Heart left ventricle (tissue), 16 donors: ENCODE measurements at regions of chr7 and their contacts with region 1.

Region 1: GRCh38 chr7:36291387-36292316 is 98.0 kb upstream of the ANLN start:
- DNase-seq: peak; percentile 81 to 91 (median 88)
- ATAC-seq: peak; percentile 87 to 94 (median 92)
- H3K4me3 ChIP-seq: peak overlapping the region in 11 of 12 donors; percentile 9 to 59 (median 43)
- H3K27ac ChIP-seq: peak overlapping the region; percentile 8 to 86 (median 80)
- H3K4me1 ChIP-seq: peaks cover 0 to 49% (median 30%) of the 10 kb centered on the region in 12 donors
- H3K27me3 ChIP-seq: no peaks in the 10 kb centered on the region
- CTCF ChIP-seq: peak; percentile 93 to 99 (median 98)
- POLR2A ChIP-seq: no peak

Region 2: DNA sequence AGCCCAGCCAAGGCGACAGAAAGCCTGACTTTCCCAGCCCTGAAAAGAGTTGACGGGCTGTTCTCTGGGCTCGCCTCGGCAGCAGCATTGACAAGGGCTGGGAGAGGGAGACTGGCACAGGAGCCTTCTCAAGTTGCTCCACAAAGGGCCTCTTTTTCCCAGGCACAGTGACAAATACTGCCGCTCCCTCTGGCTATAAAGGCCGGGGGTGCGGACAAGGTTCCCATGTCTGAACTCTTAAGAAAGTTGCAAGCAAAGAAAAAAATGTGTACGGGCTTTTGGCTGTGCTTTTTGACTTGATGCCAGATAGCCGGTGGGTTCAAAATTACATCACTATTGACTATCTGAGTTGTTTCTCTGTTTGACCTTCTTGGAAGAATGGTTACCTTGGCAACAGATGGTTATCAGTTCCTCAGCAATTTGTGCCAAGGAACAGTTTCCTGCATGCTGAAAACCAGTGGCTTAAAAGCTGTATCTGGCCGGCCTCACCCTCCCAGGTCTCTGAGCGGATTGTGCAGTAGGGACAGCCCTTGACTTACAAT is 254.5 kb before region 1 on chr7:
- intact Hi-C with region 1: loop called in 1 of 10 experiments (anchors 5 kb)
- DNase-seq: peak in 4 of 5 donors; percentile 58 to 73 (median 70)
- ATAC-seq: peak; percentile 74 to 87 (median 79)
- H3K4me3 ChIP-seq: peak overlapping the region in 1 of 12 donors; percentile 36
- H3K27ac ChIP-seq: peak overlapping the region; percentile 56 to 94 (median 84)
- H3K4me1 ChIP-seq: peaks cover 0 to 53% (median 35%) of the 10 kb centered on the region in 12 donors
- H3K27me3 ChIP-seq: no peaks in the 10 kb centered on the region
- CTCF ChIP-seq: peak in 1 of 12 donors; percentile 20
- POLR2A ChIP-seq: no peak

Region 3: DNA sequence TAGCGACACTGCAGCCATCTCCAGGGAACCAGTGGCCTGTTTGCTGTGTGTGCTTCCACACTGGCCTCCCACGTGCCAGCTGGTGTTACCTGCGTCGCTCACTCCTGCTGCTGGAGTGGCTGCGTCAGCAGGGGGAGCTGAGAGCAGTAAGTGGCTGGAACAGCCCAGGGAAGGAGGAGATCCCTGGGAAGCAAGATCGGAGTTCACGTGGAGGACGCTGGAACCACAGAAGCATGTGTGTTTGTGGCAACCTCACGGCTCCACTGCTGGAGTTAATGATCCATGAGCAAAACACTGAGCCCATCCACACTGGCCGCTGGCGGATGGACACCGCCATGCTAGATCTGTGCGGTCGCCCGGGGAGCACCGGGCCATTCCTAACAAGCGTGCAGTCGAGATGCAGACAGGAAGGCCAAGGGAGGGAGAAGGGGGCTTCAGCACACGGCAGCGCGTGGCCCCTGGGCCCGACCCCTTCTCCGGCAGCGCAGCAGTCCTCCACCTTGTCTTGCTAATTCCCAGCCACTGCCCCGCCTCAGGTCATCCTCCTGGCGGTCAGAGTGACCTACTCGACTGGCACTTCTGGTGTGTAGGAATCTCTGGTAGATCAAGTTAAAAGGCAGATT is 207.1 kb before region 1 on chr7:
- intact Hi-C with region 1: loop called in 2 of 10 experiments (anchors 10 kb)
- DNase-seq: peak in 2 of 5 donors; percentile 47 to 50
- ATAC-seq: peak in 3 of 4 donors; percentile 70 to 80 (median 70)
- H3K4me3 ChIP-seq: no peak overlapping the region
- H3K27ac ChIP-seq: no peak overlapping the region
- H3K4me1 ChIP-seq: peaks cover 0 to 11% (median 0%) of the 10 kb centered on the region in 12 donors
- H3K27me3 ChIP-seq: no peaks in the 10 kb centered on the region
- CTCF ChIP-seq: peak in 11 of 12 donors; percentile 13 to 47 (median 22)
- POLR2A ChIP-seq: no peak

Region 4: DNA sequence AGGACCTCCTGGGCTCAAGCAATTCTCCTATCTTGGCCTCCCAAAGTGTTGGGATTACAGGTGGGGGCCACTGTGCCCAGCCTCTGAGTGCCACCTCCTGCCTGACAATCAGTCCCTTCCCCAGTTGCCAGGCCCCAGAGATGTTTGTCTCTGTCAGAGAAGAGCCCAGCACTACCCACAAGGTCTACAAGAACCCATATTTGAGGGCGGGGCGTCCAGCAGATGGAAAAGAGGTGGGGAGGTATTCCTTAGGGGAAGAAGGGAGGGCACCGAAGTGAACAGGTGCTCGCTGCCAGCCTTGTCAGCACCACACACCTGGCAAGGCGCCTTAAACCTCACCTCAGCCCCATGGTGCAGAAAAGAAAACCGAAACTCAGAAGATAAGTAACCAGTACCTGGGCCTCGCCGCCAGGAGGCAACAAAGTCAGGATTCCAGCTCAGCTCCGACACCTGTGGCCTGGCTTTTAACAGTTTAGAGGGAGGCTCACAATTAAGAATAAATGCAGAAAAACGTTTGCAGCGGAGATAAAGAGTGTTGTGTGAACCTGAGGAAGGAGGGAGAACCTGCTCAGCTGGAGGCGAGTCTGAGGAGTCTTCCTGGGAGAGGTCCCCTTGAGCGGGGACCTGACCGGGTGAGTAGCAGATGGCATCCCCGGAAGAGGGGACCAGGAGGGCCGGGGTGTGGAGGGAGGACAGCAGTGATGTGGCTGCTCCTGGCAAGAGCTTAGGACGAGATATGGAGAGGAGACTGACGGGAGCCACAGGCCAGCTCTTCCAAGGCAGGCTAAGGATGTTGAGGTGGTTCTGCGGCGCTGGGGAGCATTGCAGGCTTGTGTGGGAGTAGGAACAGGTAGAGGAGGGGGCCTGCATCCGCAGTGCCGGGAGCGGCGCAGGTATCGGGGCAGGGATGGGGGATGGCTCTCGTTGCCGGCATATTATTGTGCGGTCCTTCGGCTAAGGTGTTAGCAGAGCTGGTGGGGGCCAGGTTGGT is 21.0 kb after region 1 on chr7:
- intact Hi-C with region 1: loop called in 1 of 10 experiments (anchors 2 kb)
- DNase-seq: no peak
- ATAC-seq: no peak
- H3K4me3 ChIP-seq: no peak overlapping the region
- H3K27ac ChIP-seq: no peak overlapping the region
- H3K4me1 ChIP-seq: peaks cover 0 to 15% (median 4%) of the 10 kb centered on the region in 12 donors
- H3K27me3 ChIP-seq: no peaks in the 10 kb centered on the region
- CTCF ChIP-seq: no peak
- POLR2A ChIP-seq: no peak

Region 5: DNA sequence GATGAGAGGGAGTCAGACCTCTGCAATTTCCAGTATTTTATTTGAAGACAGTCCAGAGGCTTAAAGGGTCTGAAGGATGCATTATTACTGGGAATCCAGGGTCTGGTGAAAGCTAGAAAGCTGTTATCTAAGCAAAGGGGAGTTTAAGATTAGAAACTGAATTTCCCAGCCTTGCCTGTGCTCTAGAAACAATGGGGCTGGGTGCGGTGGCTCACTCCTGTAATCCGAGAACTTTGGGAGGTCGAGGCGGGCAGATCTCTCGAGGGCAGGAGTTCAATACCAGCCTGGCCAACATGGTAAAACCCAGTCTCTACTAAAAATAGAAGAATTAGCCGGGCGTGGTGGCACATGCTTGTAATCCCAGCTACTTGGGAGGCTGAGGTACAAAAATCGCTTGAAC is 26.5 kb after region 1 on chr7:
- intact Hi-C with region 1: loop called in 2 of 10 experiments (anchors 2 kb)
- DNase-seq: no peak
- ATAC-seq: no peak
- H3K4me3 ChIP-seq: no peak overlapping the region
- H3K27ac ChIP-seq: no peak overlapping the region
- H3K4me1 ChIP-seq: peaks cover 0 to 8% (median 4%) of the 10 kb centered on the region in 12 donors
- H3K27me3 ChIP-seq: no peaks in the 10 kb centered on the region
- CTCF ChIP-seq: no peak
- POLR2A ChIP-seq: no peak